Activated naive CD4-positive, alpha-beta T cell treated with anti-CD3 and anti-CD28 coated beads for 36 hours (primary cell): ENCODE measurements at regions of chr15 and their contacts with region 1.

Region 1: DNA sequence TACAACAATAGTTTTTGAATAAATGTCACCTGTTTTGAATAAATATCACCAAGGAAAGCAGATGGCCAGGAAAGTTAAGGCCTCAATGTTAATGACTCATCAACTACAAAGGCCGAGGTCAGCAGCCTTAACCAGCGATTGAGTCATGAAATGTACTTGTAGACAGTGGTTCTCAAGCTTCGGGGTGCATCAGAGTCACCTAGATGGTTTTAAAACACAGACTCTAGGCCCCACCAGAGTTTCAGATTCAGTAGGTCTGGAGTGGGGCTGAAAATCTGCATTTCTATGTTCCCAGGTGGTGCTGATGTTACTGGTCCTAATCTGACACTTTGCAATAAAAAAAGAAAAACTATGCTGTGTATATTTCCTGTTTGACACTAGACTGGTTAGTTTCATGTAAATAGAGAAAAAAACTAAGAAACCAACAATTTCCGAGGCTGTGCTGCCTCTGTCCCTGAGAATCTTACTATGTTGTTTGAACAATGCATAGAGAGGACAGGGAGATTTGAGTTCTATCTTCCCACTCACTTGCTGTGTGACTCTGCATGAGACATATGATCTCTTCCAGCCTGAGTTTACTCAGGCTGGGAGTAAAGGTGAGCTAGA is 9.8 kb downstream of the RAB27A start:
- DNase-seq: peak; percentile 72
- H3K4me3 Mint-ChIP-seq: peak overlapping the region; percentile 31
- H3K27ac Mint-ChIP-seq: peak overlapping the region; percentile 90
- H3K4me1 Mint-ChIP-seq: peaks cover 95% of the 10 kb centered on the region
- H3K27me3 Mint-ChIP-seq: no peaks in the 10 kb centered on the region

Region 2: DNA sequence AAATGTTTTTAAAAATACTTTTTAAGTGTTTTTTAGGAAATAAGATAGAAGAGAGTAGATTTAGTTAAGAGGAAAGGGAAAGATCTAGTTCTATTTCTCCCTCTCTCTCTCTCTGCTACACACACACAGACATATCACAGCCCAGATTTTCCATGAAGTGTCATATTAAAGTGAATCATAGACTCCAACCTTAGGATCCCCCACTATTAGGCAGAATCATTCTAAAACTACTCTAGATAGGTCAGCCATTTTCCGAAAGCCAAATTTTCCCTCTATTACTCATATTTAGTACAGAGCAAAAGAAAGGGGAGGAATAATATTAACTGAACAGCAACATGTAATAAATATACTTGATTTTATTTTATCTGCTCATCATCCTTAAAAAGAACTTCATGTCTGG is 38.0 kb before region 1 on chr15:
- CTCF ChIA-PET with region 1: interaction called, 3 read pairs
- intact Hi-C with region 1: loop called (anchors 1 kb)
- DNase-seq: no peak
- H3K4me3 Mint-ChIP-seq: no peak overlapping the region
- H3K27ac Mint-ChIP-seq: peak overlapping the region; percentile 79
- H3K4me1 Mint-ChIP-seq: peaks cover 75% of the 10 kb centered on the region
- H3K27me3 Mint-ChIP-seq: no peaks in the 10 kb centered on the region

Region 3: DNA sequence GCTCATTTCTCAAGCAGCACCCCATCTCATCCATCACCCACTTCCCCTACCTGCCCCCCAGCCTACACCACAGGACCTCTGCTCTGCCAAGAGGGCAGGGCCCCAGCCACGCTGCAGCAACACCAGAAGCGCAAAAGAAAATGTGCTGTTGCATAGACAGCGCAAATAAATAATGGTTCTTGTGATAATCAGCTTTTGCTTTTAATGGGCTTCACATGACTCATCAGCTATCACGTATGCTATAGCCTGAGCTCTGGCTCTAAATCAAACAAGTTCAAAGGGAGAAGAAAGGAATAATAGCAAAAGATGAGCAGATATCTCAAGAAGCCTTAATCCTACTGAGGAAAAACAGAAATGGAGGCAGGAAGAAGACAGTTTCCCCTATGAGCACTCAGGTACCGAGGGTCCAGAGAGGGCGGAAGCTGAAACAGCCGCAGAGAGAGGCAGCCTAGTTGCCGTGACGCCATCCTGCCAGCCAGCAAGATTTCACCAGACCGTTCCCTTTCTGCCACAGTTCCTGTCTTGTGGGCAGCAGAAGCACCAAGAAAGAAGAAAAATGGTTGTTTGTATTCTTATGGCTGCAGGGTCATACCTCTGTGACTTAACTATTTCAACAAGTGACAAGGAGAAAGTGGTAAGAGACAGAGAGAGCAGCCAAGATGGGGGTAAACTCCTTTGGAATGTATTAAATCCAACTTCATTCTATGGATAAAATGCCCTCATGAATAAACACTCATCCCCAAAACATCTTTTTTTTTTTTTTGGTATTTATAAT is 12.3 kb before region 1 on chr15:
- CTCF ChIA-PET with region 1: interaction called, 4 read pairs
- intact Hi-C with region 1: loop called (anchors 1 kb)
- DNase-seq: peak; percentile 81
- H3K4me3 Mint-ChIP-seq: peak overlapping the region; percentile 64
- H3K27ac Mint-ChIP-seq: peak overlapping the region; percentile 89
- H3K4me1 Mint-ChIP-seq: peaks cover 54% of the 10 kb centered on the region
- H3K27me3 Mint-ChIP-seq: no peaks in the 10 kb centered on the region

Region 4: DNA sequence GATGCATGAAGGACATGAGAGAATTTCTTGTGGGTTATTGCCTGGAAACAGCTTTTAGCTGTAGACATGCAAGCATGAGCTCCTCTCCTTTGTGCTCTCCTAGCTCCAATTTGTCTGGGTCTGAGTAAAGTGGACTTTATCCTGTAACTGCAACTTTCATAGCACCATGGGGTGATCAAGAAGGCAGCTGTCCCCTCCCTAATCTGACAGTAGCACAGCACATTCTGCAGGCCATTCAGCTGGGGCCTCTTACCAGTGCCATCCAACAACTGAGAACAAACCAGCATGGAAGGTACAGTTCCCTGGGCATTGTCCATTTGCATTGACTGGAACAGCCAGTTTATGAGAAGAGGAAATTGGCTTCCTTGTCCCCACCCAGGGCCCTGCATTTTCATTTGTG is 17.5 kb after region 1 on chr15:
- CTCF ChIA-PET with region 1: no interaction called
- intact Hi-C with region 1: no loop called
- DNase-seq: no peak
- H3K4me3 Mint-ChIP-seq: no peak overlapping the region
- H3K27ac Mint-ChIP-seq: no peak overlapping the region
- H3K4me1 Mint-ChIP-seq: no peaks in the 10 kb centered on the region
- H3K27me3 Mint-ChIP-seq: no peaks in the 10 kb centered on the region